Activated B cell treated with CpG ODN at 0.5 μM for 24 hours (primary cell): ENCODE measurements at regions of chr20 and their contacts with region 1.

Region 1: DNA sequence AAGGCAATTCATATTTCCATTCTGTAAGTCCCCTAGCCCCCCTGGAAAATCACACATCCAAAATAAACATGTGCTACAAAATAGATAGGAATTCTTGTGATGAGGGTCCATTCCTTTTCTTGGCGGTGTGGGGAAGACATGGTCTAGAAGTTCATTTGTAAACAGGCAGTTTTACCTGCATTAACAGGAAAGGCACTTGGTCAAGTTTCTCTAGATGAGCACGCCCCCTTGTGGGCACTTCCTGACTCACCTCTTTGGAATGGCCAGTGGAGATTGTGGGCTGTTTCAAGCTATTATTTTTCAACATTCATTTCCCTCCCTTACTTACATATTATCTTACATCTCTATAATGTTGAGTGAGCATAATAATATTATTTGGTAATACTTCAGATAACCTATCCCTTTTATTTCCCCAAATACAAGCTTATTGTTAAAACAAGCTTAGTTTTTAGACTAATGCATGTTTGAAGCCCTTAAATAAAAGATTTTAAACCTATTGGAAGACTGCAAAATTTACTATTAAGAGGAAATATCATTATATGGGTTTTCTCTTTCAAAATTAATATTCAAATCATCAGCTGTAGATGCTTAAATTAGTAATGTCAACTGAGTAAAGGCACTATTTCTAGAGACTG is 92.1 kb downstream of the TASP1 start:
- DNase-seq: peak; percentile 17
- ATAC-seq: no peak
- H3K4me3 Mint-ChIP-seq: no peak overlapping the region
- H3K27ac Mint-ChIP-seq: no peak overlapping the region
- H3K4me1 Mint-ChIP-seq: no peaks in the 10 kb centered on the region
- H3K27me3 Mint-ChIP-seq: no peaks in the 10 kb centered on the region
- CTCF ChIP-seq: no peak

Region 2: GRCh38 chr20:12970372-12970821 is 576.2 kb before region 1 on chr20:
- CTCF ChIA-PET with region 1: no interaction called
- POLR2A ChIA-PET with region 1: no interaction called
- intact Hi-C with region 1: loop called (anchors 2 kb)
- DNase-seq: no peak
- ATAC-seq: no peak
- H3K4me3 Mint-ChIP-seq: no peak overlapping the region
- H3K27ac Mint-ChIP-seq: no peak overlapping the region
- H3K4me1 Mint-ChIP-seq: no peaks in the 10 kb centered on the region
- H3K27me3 Mint-ChIP-seq: no peaks in the 10 kb centered on the region
- CTCF ChIP-seq: no peak

Region 3: GRCh38 chr20:13458860-13459451 is 87.7 kb before region 1 on chr20:
- CTCF ChIA-PET with region 1: interaction called, 3 read pairs
- POLR2A ChIA-PET with region 1: no interaction called
- intact Hi-C with region 1: loop called (anchors 2 kb)
- DNase-seq: no peak
- ATAC-seq: peak; percentile 54
- H3K4me3 Mint-ChIP-seq: no peak overlapping the region
- H3K27ac Mint-ChIP-seq: no peak overlapping the region
- H3K4me1 Mint-ChIP-seq: no peaks in the 10 kb centered on the region
- H3K27me3 Mint-ChIP-seq: no peaks in the 10 kb centered on the region
- CTCF ChIP-seq: no peak

Region 4: DNA sequence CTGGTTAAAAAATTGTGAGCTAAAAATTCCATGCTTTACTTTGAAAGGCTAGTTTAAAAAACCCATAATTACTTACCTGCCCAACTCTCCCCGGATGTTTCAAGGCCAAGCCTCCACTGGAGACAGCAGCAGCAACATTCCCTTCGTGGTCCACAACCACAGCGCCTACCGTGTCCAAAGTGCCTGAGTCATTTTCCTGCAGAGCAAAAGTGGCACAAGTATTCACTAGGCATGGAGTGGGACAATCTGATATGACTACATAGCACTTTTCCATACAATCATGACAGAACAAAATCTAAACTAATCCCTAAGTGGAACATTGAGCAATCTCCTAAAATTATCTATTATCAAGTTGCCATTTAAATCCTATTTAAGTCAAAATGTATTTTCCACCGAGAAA is 12.7 kb before region 1 on chr20:
- CTCF ChIA-PET with region 1: interaction called, 15 read pairs
- POLR2A ChIA-PET with region 1: no interaction called
- intact Hi-C with region 1: no loop called
- DNase-seq: no peak
- ATAC-seq: no peak
- H3K4me3 Mint-ChIP-seq: no peak overlapping the region
- H3K27ac Mint-ChIP-seq: no peak overlapping the region
- H3K4me1 Mint-ChIP-seq: no peaks in the 10 kb centered on the region
- H3K27me3 Mint-ChIP-seq: no peaks in the 10 kb centered on the region
- CTCF ChIP-seq: no peak

Region 5: DNA sequence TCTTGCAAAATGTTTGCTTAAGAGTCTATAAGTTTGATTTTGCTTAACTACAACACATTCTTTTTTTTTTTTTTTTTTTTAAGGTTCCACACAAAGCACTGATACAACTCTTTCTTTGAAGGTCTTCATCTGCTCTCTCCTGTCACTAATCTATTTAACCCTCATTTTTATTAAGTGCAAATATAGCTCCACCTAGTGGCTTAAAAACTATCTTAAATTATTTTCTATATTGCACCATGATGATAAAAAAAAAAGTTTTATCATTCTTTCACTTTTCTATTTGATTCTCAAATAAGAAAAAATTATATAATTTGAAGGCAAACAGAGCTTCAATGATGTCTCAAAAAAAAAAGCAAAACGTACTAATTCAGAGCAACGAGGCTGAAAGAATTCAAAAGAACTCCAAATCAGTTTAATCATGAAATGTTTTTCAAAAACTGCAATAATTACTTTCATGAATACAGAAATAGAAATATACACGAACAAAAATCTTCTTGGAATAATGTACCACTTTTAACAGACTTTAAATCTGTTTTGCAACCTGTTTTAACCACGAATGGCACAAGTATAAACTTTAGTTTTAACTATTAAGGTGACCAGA is 225.3 kb after region 1 on chr20:
- CTCF ChIA-PET with region 1: interaction called, 16 read pairs
- POLR2A ChIA-PET with region 1: no interaction called
- intact Hi-C with region 1: loop called (anchors 5 kb)
- DNase-seq: no peak
- ATAC-seq: no peak
- H3K4me3 Mint-ChIP-seq: no peak overlapping the region
- H3K27ac Mint-ChIP-seq: no peak overlapping the region
- H3K4me1 Mint-ChIP-seq: peaks cover 9% of the 10 kb centered on the region
- H3K27me3 Mint-ChIP-seq: no peaks in the 10 kb centered on the region
- CTCF ChIP-seq: no peak

Region 6: DNA sequence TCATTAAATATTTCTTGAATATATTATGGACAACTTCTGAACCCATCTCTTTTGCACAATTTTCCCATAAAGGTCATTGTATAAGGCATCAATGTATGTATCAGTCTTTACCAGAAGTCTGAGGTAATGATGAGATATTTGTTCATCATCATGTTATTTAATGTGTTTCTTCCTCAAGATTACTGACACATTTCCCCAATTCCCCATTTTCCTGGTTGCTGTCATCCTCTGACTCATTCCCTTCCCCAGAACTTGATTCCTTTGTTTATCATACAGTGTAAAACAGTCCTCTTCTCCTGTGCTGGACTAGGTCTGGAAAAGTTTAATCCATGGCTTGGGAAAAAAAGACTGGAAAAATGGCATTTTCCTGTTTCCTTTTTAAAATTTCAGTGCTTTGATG is 898.7 kb after region 1 on chr20:
- CTCF ChIA-PET with region 1: no interaction called
- POLR2A ChIA-PET with region 1: no interaction called
- intact Hi-C with region 1: no loop called
- DNase-seq: no peak
- ATAC-seq: no peak
- H3K4me3 Mint-ChIP-seq: no peak overlapping the region
- H3K27ac Mint-ChIP-seq: no peak overlapping the region
- H3K4me1 Mint-ChIP-seq: no peaks in the 10 kb centered on the region
- H3K27me3 Mint-ChIP-seq: no peaks in the 10 kb centered on the region
- CTCF ChIP-seq: no peak